SK-N-SH (cell line): ENCODE measurements at regions of chr12 and their contacts with region 1.

Region 1: DNA sequence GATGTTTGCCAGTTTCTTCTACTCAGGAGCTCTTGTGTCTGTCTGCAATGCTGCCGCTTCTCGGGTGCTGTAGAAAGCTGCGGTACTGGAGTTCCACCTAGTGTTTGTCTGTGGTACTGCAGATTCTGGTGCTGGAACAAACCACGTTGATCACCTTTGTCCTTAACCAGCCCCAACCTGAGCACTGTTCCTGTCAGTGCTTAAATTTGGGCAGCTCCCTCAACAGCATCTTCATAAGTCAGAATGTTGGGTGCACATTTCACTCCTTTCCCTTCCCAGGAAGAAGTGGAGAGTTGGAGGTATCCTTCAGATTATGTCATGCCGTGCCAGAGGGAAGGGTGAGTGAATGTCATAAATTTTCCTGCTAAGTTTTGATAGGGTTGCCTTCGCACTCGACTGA is 48.7 kb upstream of the LALBA start:
- DNase-seq: peak; percentile 62
- H3K4me3 ChIP-seq: no peak overlapping the region; a peak in 1 of 4 replicates
- H3K27ac ChIP-seq: no peak overlapping the region
- H3K4me1 ChIP-seq: no peaks in the 10 kb centered on the region
- H3K27me3 ChIP-seq: no peaks in the 10 kb centered on the region; the same call in 1 of the 2 replicates
- CTCF ChIP-seq: peak; percentile 94
- EP300 ChIP-seq: no peak
- RAD21 ChIP-seq: peak; percentile 97

Region 2: GRCh38 chr12:48183091-48183875 is 435.3 kb before region 1 on chr12 and contains the start of gene CCDC184:
- CTCF ChIA-PET with region 1: interaction called, 10 read pairs
- POLR2A ChIA-PET with region 1: no interaction called
- DNase-seq: peak; percentile 91
- H3K4me3 ChIP-seq: peak within 1 kb of the TSS; percentile 65 to 90
- H3K27ac ChIP-seq: peak within 1 kb of the TSS; percentile 80 to 96
- H3K4me1 ChIP-seq: peaks cover 9 to 26% of the 10 kb centered on the region in 2 experiments; a peak in 3 of 4 replicates
- H3K27me3 ChIP-seq: no peaks in the 10 kb centered on the region
- CTCF ChIP-seq: peak; percentile 54
- EP300 ChIP-seq: no peak; a peak in 2 of 4 replicates
- RAD21 ChIP-seq: peak; percentile 40
- polyA plus RNA-seq, gene CCDC184: 4.2 and 5.8 TPM in 2 replicates

Region 3: DNA sequence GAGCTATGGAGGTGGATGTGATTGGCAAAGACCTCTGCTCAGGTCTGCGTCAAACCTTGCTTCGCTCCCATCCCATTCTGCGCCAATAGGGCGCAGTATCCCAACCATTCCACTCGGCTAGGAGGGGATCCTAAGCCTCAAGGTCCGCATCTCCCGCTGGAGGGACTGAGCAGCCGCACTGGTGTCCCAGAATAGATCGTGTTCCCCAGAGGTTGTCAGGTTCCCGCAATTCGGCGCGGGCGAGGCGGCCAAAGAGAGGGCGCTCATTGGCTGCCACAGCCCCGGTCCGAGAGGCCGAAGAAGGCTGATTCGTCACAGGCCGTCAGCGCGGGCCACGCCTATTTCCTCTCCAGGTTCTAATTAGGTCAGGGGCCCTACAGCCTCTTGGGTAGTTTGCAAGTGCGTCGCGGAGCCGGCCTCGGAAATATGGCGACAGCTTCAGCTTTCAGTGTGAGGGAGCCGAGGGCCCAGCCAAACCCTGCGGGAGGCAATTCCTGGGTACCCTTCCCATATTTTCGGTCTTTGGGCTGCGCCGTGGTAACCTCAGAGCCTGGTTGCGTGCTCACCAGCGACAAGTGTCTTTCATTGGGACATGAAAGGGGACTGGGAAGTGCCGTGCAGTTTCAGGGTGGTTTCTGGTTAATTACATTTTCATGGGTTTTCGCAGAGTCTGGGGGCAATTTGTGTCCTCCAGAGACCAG is 420.4 kb before region 1 on chr12:
- CTCF ChIA-PET with region 1: interaction called, 10 read pairs
- POLR2A ChIA-PET with region 1: no interaction called
- DNase-seq: peak; percentile 91
- H3K4me3 ChIP-seq: peak overlapping the region; percentile 67 to 83
- H3K27ac ChIP-seq: peak overlapping the region; percentile 64 to 96
- H3K4me1 ChIP-seq: peaks cover 7 to 19% of the 10 kb centered on the region in 2 experiments
- H3K27me3 ChIP-seq: no peaks in the 10 kb centered on the region
- CTCF ChIP-seq: no peak
- EP300 ChIP-seq: no peak
- RAD21 ChIP-seq: no peak; the same call in 1 of the 2 replicates

Region 4: DNA sequence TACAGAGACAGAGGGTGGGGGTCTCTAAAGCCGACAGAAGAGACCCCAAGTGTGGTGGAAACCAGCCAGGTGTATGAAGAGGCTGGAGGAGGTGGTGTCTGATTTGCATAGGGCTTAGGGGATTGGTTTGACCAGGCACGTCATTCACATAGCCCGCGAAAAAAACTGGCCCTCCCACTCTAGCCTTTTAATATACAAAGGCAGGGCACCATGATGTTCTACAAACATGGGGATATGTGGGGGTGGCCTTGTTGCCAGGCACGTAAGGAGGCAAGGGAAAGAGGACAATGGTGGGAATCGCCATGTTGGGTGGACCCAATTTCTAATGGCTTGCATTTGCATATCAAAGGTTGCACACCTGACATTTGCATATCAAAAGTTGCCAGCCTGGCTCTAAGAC is 61.9 kb before region 1 on chr12:
- CTCF ChIA-PET with region 1: interaction called, 10 read pairs
- POLR2A ChIA-PET with region 1: no interaction called
- DNase-seq: no peak
- H3K4me3 ChIP-seq: no peak overlapping the region
- H3K27ac ChIP-seq: no peak overlapping the region
- H3K4me1 ChIP-seq: no peaks in the 10 kb centered on the region
- H3K27me3 ChIP-seq: no peaks in the 10 kb centered on the region
- CTCF ChIP-seq: no peak
- EP300 ChIP-seq: no peak
- RAD21 ChIP-seq: no peak

Region 5: DNA sequence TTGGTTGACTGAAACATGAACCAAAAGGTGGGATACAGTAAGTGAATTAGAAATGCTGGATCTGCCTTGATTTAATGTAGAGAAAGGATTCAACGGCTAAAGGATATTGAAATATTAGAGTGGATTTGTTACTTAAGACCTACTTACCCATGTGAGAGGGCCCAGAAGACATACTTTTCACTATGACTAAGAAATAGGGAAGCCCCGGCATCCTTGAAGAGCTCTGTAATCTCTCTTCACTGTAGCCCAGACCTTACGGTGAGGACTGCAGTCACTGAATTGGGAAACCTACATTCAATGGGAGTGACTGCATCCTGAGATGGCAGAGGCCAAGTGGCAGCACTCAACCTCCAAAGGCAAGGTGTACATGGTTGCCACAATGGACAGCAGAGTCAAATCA is 11.0 kb after region 1 on chr12:
- CTCF ChIA-PET with region 1: interaction called, 16 read pairs
- POLR2A ChIA-PET with region 1: no interaction called
- DNase-seq: no peak
- H3K4me3 ChIP-seq: no peak overlapping the region
- H3K27ac ChIP-seq: no peak overlapping the region
- H3K4me1 ChIP-seq: no peaks in the 10 kb centered on the region
- H3K27me3 ChIP-seq: no peaks in the 10 kb centered on the region
- CTCF ChIP-seq: no peak
- EP300 ChIP-seq: no peak
- RAD21 ChIP-seq: no peak

Region 6: GRCh38 chr12:48690990-48691389 is 72.4 kb after region 1 on chr12:
- CTCF ChIA-PET with region 1: no interaction called
- POLR2A ChIA-PET with region 1: no interaction called
- DNase-seq: no peak
- H3K4me3 ChIP-seq: no peak overlapping the region
- H3K27ac ChIP-seq: no peak overlapping the region
- H3K4me1 ChIP-seq: no peaks in the 10 kb centered on the region
- H3K27me3 ChIP-seq: no peaks in the 10 kb centered on the region
- CTCF ChIP-seq: no peak
- EP300 ChIP-seq: no peak
- RAD21 ChIP-seq: no peak

Region 7: GRCh38 chr12:48712209-48712608 is 93.7 kb after region 1 on chr12:
- CTCF ChIA-PET with region 1: no interaction called
- POLR2A ChIA-PET with region 1: no interaction called
- DNase-seq: no peak
- H3K4me3 ChIP-seq: no peak overlapping the region
- H3K27ac ChIP-seq: no peak overlapping the region
- H3K4me1 ChIP-seq: peaks cover 5 to 6% of the 10 kb centered on the region in 2 experiments; a peak in 2 of 4 replicates
- H3K27me3 ChIP-seq: no peaks in the 10 kb centered on the region
- CTCF ChIP-seq: no peak
- EP300 ChIP-seq: no peak
- RAD21 ChIP-seq: no peak